Tibial artery (tissue), 4 donors: ENCODE measurements at regions of chr6 and their contacts with region 1.

Region 1: GRCh38 chr6:3356056-3356761 is 97.5 kb downstream of the PSMG4 start:
- DNase-seq: peak; percentile 86
- H3K4me3 ChIP-seq: peak overlapping the region; percentile 44 to 52
- H3K27ac ChIP-seq: peak overlapping the region; percentile 81 to 88
- H3K4me1 ChIP-seq: peaks cover 0 to 23% (median 16%) of the 10 kb centered on the region in 4 donors
- H3K27me3 ChIP-seq: no peaks in the 10 kb centered on the region
- CTCF ChIP-seq: no peak

Region 2: DNA sequence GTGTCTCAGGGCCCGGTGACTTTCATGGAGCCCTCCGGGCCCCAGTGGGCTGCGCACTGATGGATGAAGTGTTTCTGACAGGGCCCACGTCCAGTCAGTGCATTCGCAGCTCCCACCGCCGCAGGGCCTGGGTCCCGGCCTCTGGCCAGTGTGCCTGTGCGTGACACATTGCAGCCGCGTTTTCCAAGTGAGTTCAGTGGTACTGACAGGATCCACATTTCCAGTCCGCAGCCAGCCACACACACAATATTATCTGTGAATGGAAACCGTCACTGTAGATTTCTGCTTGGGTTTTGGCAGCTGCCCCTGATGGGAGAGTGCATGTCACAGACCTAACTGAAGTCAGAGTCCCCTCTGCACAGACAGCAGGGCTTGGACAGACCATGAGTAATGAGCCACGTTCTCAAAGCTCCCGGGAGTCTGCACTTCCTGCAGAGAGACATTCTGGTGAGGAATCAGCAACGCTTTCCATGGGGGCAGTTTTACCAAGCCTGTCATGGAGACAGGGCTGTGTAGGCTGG is 776.9 kb before region 1 on chr6:
- intact Hi-C with region 1: no loop called
- DNase-seq: no peak
- H3K4me3 ChIP-seq: no peak overlapping the region
- H3K27ac ChIP-seq: no peak overlapping the region
- H3K4me1 ChIP-seq: peaks cover 0 to 6% (median 2%) of the 10 kb centered on the region in 4 donors
- H3K27me3 ChIP-seq: no peaks in the 10 kb centered on the region
- CTCF ChIP-seq: no peak

Region 3: DNA sequence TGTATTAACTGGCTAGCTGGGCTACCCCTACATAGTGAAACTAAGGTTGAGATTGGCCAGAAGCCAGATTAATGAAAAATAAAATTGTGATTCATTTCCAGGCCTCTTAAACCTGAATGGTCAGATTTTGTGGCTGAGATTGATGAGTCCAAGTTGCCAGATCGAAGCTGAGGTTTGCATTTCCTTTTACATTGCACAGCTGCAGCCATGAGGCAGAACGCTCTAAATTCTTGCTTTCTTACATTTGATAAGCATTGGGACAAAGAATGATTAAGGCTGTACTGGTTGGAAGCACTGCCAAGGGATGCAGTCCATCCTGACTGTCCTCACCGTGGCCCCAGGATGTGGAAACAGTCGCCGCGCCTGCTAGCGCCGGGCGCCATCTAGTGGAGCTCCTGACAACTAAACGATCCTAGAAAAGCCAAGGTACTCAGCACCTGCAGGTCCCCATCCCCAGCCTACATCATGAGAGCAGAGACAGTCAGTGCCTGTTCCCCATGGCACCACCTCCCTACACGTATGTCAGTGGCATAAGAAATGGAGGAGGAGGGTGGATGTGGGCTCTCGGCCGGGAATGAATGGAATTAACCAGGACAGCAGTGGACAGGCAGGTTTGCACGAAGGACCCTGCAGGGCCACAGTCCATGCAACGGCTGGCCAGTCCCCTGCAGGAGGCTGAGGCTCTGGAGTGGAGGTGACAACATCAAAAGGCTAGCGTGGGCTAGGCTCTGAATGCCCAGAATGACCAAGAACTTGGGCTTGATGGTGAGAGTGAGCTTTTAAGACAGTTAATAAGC is 376.3 kb after region 1 on chr6:
- intact Hi-C with region 1: loop called (anchors 10 kb)
- DNase-seq: peak; percentile 73 to 86
- H3K4me3 ChIP-seq: peak overlapping the region in 1 of 2 donors; percentile 3
- H3K27ac ChIP-seq: peak overlapping the region; percentile 62 to 75
- H3K4me1 ChIP-seq: peaks cover 0 to 100% (median 68%) of the 10 kb centered on the region in 4 donors
- H3K27me3 ChIP-seq: no peaks in the 10 kb centered on the region
- CTCF ChIP-seq: peak; percentile 86 to 87

Region 4: GRCh38 chr6:3825851-3826581 is 469.8 kb after region 1 on chr6:
- intact Hi-C with region 1: no loop called
- DNase-seq: peak; percentile 92 to 99
- H3K4me3 ChIP-seq: peak overlapping the region; percentile 26 to 40
- H3K27ac ChIP-seq: peak overlapping the region; percentile 83 to 86
- H3K4me1 ChIP-seq: peaks cover 0 to 61% (median 47%) of the 10 kb centered on the region in 4 donors
- H3K27me3 ChIP-seq: no peaks in the 10 kb centered on the region
- CTCF ChIP-seq: no peak